Activated T-helper 1 cell treated with anti-CD3 and anti-CD28 coated beads, Interleukin-12 subunit alpha, Interleukin-12 subunit beta, Interleukin-2, Interleukin-4 antibody, amounts not matched to agents 30 ng/mL and 10 ng/mL and 1 ng/mL, durations not matched to agents 14 hours and 24 hours and 36 hours (primary cell): ENCODE measurements at regions of chr17 and their contacts with region 1.

Region 1: GRCh38 chr17:10327640-10328039 is 45.2 kb downstream of the MYH13 start:
- DNase-seq: peak; percentile 46
- H3K4me3 Mint-ChIP-seq: no peak overlapping the region
- H3K27ac Mint-ChIP-seq: no peak overlapping the region
- H3K4me1 Mint-ChIP-seq: no peaks in the 10 kb centered on the region
- H3K27me3 Mint-ChIP-seq: no peaks in the 10 kb centered on the region

Region 2: DNA sequence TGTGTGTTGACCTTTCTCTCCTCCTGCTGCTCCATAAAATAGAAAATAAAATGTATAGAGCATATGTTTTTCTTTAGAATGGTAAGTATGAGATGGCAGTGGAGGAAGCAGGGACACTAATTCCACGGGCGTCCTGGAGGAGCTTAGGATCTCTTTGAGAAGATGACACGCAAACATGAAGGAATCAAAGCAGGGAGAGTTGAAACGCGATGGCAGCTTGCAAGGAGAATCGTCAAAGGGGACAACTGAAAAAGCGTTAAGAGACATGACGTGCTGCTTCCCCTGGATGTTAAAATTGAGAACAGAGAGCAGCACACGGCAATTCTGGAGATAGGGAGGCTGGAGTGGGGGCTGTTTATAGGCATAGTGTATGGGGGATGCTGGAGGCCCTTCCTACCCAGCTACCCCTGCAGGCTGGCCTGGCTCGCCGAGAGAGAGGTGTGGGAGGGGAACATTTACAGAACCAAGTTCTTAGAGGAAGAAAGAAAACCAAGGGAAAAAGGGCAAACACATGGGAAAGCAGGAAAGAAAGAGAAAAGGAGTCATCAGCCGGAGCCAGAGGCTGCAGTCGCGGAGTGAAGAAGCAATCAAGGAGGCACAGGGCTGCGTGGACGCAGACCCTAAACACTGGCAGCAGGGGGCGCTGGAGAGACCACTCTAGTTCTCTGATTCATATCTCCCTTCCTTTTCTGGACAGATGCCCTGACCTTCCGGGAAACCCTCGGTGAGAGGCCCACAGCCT is 10.7 kb before region 1 on chr17:
- intact Hi-C with region 1: loop called (anchors 1 kb)
- DNase-seq: no peak
- H3K4me3 Mint-ChIP-seq: no peak overlapping the region
- H3K27ac Mint-ChIP-seq: no peak overlapping the region
- H3K4me1 Mint-ChIP-seq: no peaks in the 10 kb centered on the region
- H3K27me3 Mint-ChIP-seq: peaks cover 3% of the 10 kb centered on the region

Region 3: GRCh38 chr17:10618202-10618635 is 290.6 kb after region 1 on chr17:
- intact Hi-C with region 1: loop called (anchors 1 kb)
- DNase-seq: peak; percentile 29
- H3K4me3 Mint-ChIP-seq: no peak overlapping the region
- H3K27ac Mint-ChIP-seq: no peak overlapping the region
- H3K4me1 Mint-ChIP-seq: no peaks in the 10 kb centered on the region
- H3K27me3 Mint-ChIP-seq: peaks cover 1% of the 10 kb centered on the region